PC-9 (cell line): ENCODE measurements at regions of chr11 and their contacts with region 1.

Region 1: GRCh38 chr11:9118277-9118676 is 26.9 kb upstream of the SCUBE2 start:
- DNase-seq: no peak
- H3K4me3 ChIP-seq: no peak overlapping the region
- H3K27ac ChIP-seq: no peak overlapping the region
- H3K4me1 ChIP-seq: no peaks in the 10 kb centered on the region
- H3K27me3 ChIP-seq: no peaks in the 10 kb centered on the region
- CTCF ChIP-seq: no peak

Region 2: GRCh38 chr11:8956860-8957259 is 161.4 kb before region 1 on chr11:
- CTCF ChIA-PET with region 1: no interaction called
- POLR2A ChIA-PET with region 1: interaction called, 16 read pairs
- intact Hi-C with region 1: no loop called
- DNase-seq: no peak
- H3K4me3 ChIP-seq: no peak overlapping the region
- H3K27ac ChIP-seq: no peak overlapping the region
- H3K4me1 ChIP-seq: no peaks in the 10 kb centered on the region
- H3K27me3 ChIP-seq: no peaks in the 10 kb centered on the region
- CTCF ChIP-seq: no peak